Lower leg skin (tissue), 4 donors: ENCODE measurements at regions of chr1 and their contacts with region 1.

Region 1: DNA sequence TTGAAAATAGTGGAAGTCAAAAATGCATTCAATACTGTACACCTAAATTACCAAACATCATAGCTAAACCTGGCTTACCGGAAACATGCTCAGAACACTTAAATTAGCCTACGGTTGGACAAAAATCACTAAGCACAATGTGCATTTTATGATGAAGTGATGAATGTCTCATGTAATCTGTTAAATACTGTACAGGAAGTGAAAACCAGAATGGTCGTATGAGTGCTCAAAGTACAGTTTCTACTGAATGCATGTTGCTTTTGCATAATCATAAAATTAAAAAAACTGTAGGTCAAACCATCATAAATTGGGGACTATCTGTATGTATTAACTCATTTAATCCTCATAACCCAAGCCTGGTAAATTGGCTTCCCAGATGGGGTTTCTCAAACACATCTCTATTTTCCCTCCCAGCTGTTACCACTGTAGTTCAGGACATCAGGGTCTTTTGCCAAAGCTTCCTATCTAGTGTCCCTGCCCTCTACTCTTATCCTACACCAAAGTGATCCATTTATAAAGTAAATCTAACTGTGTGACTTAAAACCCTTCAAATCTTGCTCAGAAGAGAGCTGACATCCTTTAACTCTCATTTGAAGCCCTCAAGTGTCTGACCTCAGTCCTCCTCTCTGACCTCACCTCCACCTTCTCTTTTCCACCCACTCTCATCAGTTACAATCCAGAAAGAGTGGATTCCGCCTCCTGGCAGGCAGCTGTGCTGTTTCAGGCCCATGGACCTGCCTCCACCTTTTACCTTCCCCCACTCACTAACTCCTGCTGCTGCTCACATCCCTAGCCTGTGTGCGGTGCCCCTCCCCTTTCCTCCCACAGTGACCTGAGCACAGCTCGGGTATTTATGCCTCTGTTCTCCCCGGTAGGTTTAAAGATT is 356.4 kb upstream of the ST6GALNAC5 start:
- DNase-seq: no peak
- H3K4me3 ChIP-seq: no peak overlapping the region
- CTCF ChIP-seq: no peak
- POLR2A ChIP-seq: no peak

Region 2: DNA sequence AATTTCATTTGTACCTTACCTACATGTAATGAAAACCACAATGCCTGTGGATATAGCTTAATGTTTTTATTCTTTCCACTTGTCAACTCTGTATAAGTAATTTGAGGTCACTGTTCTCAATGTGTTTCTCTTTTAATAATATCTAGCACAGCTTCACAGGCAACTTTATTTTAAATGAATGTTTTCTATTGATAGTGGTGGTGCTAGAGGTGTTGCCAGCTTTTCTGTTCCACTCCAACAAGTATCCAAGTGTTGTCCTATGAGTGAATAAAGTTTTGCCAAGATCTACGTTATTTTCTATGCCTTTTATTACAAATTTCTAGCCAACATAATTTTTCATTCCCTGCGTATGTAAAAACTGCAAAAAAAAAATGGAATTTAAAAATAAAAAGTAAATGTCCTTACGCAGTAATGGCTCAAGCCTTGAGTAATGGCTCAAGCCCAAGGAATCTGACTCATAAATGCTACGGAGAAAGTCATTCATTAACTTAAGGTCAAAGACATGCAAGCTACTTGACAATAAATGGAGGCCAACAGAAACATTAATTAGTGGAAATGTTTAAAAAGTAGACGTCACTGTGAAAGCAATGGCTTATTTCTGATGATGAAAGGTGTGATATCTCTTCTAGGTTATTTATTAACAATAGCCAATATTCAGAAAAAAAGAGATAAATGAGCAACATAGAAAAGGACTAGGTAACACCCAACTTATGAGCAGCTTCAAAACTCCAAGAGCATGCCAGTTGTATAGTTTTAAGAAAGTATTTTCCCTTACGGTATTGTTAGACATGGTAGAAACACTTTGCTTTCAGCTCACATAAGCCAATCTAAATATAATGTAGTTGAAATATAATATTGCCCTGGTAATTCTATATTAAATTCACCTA is 971.4 kb before region 1 on chr1:
- intact Hi-C with region 1: no loop called
- DNase-seq: no peak
- H3K4me3 ChIP-seq: no peak overlapping the region
- CTCF ChIP-seq: no peak
- POLR2A ChIP-seq: no peak

Region 3: DNA sequence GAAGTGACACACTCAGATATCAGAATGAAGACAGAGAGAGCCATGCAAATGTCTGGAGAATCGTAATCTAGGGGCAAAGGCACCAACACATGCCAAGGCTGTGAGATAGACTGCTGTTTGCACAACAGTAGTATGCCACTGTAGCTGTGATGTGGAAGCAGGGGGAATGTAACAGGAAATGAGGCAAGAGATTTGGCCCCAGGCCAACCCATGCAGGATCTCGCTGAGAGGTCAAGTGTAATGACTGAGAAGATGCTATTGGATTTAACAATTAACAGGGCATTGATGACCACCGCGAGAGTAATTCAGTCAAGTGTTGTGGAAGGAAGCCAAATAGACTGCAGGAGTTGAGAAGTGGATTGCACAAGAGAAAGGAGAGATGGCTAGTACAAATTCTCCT is 249.0 kb after region 1 on chr1:
- intact Hi-C with region 1: no loop called
- DNase-seq: no peak
- H3K4me3 ChIP-seq: no peak overlapping the region
- CTCF ChIP-seq: no peak
- POLR2A ChIP-seq: no peak

Region 4: GRCh38 chr1:77413541-77414335 is 902.8 kb after region 1 on chr1:
- intact Hi-C with region 1: loop called (anchors 5 kb)
- DNase-seq: no peak
- H3K4me3 ChIP-seq: no peak overlapping the region
- CTCF ChIP-seq: no peak
- POLR2A ChIP-seq: no peak